MCF 10A (cell line): ENCODE measurements at regions of chr9 and their contacts with region 1.

Region 1: GRCh38 chr9:21688108-21689102 is 114.0 kb upstream of the MTAP start:
- DNase-seq: peak; percentile 66
- H3K4me3 Mint-ChIP-seq: peak overlapping the region; percentile 63
- H3K27ac Mint-ChIP-seq: peak overlapping the region; percentile 95
- H3K4me1 Mint-ChIP-seq: peaks cover 21% of the 10 kb centered on the region
- H3K27me3 Mint-ChIP-seq: no peaks in the 10 kb centered on the region
- CTCF ChIP-seq: no peak

Region 2: GRCh38 chr9:20980832-20981455 is 707.5 kb before region 1 on chr9:
- CTCF ChIA-PET with region 1: no interaction called
- POLR2A ChIA-PET with region 1: no interaction called
- intact Hi-C with region 1: no loop called
- DNase-seq: peak; percentile 41
- H3K4me3 Mint-ChIP-seq: no peak overlapping the region
- H3K27ac Mint-ChIP-seq: peak overlapping the region; percentile 46
- H3K4me1 Mint-ChIP-seq: peaks cover 13% of the 10 kb centered on the region
- H3K27me3 Mint-ChIP-seq: no peaks in the 10 kb centered on the region
- CTCF ChIP-seq: no peak

Region 3: GRCh38 chr9:21294904-21295538 is 393.4 kb before region 1 on chr9:
- CTCF ChIA-PET with region 1: no interaction called
- POLR2A ChIA-PET with region 1: no interaction called
- intact Hi-C with region 1: no loop called
- DNase-seq: no peak
- H3K4me3 Mint-ChIP-seq: no peak overlapping the region
- H3K27ac Mint-ChIP-seq: no peak overlapping the region
- H3K4me1 Mint-ChIP-seq: no peaks in the 10 kb centered on the region
- H3K27me3 Mint-ChIP-seq: peaks cover 16% of the 10 kb centered on the region
- CTCF ChIP-seq: no peak

Region 4: DNA sequence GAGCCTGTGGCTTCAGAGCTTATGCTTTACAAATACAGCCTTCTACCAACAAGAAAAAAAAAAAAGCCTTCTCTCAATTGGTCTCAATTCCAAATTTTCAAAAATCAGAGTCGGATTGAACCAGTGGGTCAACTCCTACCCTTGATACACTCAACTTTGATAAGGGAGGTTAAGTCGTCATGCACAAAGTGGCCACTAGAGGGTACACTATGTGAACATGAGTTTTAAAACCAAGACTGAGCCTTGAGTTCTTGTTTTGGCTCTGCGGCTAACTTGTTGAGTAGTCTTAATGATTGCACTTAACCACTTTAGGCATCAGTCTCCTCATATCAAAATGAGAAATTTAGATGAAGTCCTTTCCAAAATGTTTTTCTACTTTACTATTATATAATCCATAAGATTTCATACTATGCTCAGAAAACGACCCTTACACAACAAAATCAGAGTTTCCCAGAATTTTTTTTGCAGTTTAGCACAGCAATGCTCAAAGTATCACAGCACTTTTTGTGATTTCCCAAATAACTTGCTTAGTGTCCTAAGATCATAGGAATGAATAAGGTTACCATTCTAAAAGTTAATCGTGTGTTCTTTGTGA is 21.2 kb after region 1 on chr9:
- CTCF ChIA-PET with region 1: interaction called, 13 read pairs
- POLR2A ChIA-PET with region 1: interaction called, 6 read pairs
- intact Hi-C with region 1: no loop called
- DNase-seq: peak; percentile 59
- H3K4me3 Mint-ChIP-seq: no peak overlapping the region
- H3K27ac Mint-ChIP-seq: peak overlapping the region; percentile 35
- H3K4me1 Mint-ChIP-seq: peaks cover 6% of the 10 kb centered on the region
- H3K27me3 Mint-ChIP-seq: no peaks in the 10 kb centered on the region
- CTCF ChIP-seq: peak; percentile 29

Region 5: DNA sequence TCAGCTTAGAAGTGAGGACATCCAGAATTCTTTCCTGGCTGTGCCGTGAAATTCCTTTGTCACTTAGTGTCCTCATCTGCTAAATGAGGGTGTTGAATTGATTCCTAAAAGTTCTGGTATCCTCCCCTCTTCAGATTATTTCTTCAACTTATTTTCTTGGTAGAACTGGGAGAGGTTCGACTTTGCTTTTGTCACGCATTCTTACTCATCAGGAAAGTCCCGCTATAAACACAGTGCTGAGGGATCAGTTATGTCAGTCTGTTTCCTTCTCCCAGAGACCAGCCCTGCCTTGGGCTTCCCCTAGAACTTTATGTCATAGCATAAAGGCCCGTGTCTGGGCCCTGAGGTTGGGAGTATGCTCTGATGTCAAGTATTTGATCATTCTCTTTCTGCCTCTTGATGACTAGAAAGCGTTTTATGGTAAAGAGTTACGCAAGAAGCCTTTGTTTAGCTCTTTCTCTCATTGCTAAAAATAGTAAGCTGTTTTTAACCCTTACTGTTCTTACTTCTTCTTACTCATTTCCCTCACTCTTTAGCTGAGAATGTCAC is 143.6 kb after region 1 on chr9:
- CTCF ChIA-PET with region 1: interaction called, 4 read pairs
- POLR2A ChIA-PET with region 1: interaction called, 37 read pairs
- intact Hi-C with region 1: no loop called
- DNase-seq: peak; percentile 79
- H3K4me3 Mint-ChIP-seq: no peak overlapping the region
- H3K27ac Mint-ChIP-seq: peak overlapping the region; percentile 96
- H3K4me1 Mint-ChIP-seq: peaks cover 28% of the 10 kb centered on the region
- H3K27me3 Mint-ChIP-seq: no peaks in the 10 kb centered on the region
- CTCF ChIP-seq: no peak

Region 6: DNA sequence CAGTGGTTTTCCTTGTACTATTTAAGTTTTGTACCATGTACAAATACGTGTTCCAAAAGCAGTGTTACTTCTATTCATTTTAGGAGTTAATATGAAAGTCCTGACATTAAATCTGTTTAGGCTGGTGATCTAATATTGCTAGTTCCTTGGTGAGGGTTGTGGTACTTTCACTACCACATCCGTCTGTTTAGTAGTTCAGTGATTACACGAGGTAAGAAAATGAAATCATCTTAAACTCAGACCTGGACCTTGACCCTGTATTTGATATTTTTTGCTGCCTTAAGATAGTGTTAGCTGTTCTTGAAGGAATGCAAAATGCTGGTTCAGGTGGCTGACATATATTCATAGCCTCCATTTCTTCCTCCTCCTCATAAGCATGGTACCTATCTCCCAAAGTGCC is 164.3 kb after region 1 on chr9:
- CTCF ChIA-PET with region 1: interaction called, 3 read pairs
- POLR2A ChIA-PET with region 1: interaction called, 27 read pairs
- intact Hi-C with region 1: no loop called
- DNase-seq: no peak
- H3K4me3 Mint-ChIP-seq: no peak overlapping the region
- H3K27ac Mint-ChIP-seq: no peak overlapping the region
- H3K4me1 Mint-ChIP-seq: peaks cover 16% of the 10 kb centered on the region
- H3K27me3 Mint-ChIP-seq: no peaks in the 10 kb centered on the region
- CTCF ChIP-seq: no peak

Region 7: DNA sequence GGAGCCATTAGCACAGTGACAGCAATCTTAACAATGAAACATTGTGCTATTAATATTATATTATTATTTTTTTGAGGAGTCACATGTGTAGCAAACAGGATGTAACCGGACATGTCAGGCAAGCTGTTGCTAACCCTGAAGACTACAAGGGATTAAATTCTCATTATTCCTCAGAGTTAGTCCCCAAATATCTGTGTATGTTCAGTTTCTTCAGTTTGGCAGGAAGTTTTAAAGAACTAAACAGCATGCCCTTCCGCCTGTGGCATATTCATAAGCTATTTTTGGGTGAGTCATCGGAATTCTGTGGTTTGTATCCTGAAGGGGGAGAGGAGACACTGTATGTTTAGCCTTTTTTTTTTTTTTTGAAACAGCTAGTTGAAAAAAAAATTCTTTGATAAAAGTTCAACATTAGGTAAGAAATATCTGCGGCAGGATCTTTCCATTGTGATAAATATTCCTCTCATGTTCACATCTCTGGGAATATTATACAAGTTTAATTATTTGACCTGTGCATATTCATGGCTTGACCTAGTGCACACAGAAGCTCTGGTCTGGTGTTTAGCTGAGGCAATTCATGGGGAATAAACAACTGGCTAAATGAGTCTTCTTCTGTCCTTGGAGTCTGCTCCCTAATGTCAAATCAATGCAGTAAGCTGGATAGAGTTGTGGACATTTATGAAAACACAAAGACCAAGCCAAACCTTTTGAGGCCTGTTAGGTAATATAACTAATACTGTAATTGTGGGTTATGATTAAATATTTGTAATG is 523.4 kb after region 1 on chr9:
- CTCF ChIA-PET with region 1: interaction called, 3 read pairs
- POLR2A ChIA-PET with region 1: interaction called, 4 read pairs
- intact Hi-C with region 1: loop called (anchors 5 kb)
- DNase-seq: peak; percentile 79
- H3K4me3 Mint-ChIP-seq: no peak overlapping the region
- H3K27ac Mint-ChIP-seq: peak overlapping the region; percentile 79
- H3K4me1 Mint-ChIP-seq: peaks cover 23% of the 10 kb centered on the region
- H3K27me3 Mint-ChIP-seq: no peaks in the 10 kb centered on the region
- CTCF ChIP-seq: no peak

Region 8: GRCh38 chr9:22238809-22239684 is 550.6 kb after region 1 on chr9:
- CTCF ChIA-PET with region 1: interaction called, 10 read pairs
- POLR2A ChIA-PET with region 1: interaction called, 5 read pairs
- intact Hi-C with region 1: loop called (anchors 2 kb)
- DNase-seq: peak; percentile 33
- H3K4me3 Mint-ChIP-seq: peak overlapping the region; percentile 50
- H3K27ac Mint-ChIP-seq: peak overlapping the region; percentile 86
- H3K4me1 Mint-ChIP-seq: peaks cover 37% of the 10 kb centered on the region
- H3K27me3 Mint-ChIP-seq: no peaks in the 10 kb centered on the region
- CTCF ChIP-seq: no peak